ENCODE measurements at regions of chr1 and their contacts with region 1.

Region 1: GRCh38 chr1:10494754-10495474 is 20.2 kb downstream of the PEX14 start:
- DNase-seq: peak; percentile 84
- ATAC-seq: peak; percentile 88
- H3K4me3 Mint-ChIP-seq: no peak overlapping the region
- H3K27ac Mint-ChIP-seq: peak overlapping the region; percentile 67
- H3K4me1 Mint-ChIP-seq: peaks cover 15% of the 10 kb centered on the region
- H3K27me3 Mint-ChIP-seq: no peaks in the 10 kb centered on the region
- CTCF ChIP-seq: peak; percentile 97

Region 2: GRCh38 chr1:10280439-10281350 is 214.2 kb before region 1 on chr1:
- CTCF ChIA-PET with region 1: no interaction called
- POLR2A ChIA-PET with region 1: no interaction called
- DNase-seq: no peak
- ATAC-seq: no peak
- H3K4me3 Mint-ChIP-seq: no peak overlapping the region
- H3K27ac Mint-ChIP-seq: no peak overlapping the region
- H3K4me1 Mint-ChIP-seq: no peaks in the 10 kb centered on the region
- H3K27me3 Mint-ChIP-seq: no peaks in the 10 kb centered on the region
- CTCF ChIP-seq: no peak

Region 3: GRCh38 chr1:10456661-10457060 is 38.3 kb before region 1 on chr1:
- CTCF ChIA-PET with region 1: interaction called, 15 read pairs
- POLR2A ChIA-PET with region 1: no interaction called
- DNase-seq: no peak
- ATAC-seq: no peak
- H3K4me3 Mint-ChIP-seq: no peak overlapping the region
- H3K27ac Mint-ChIP-seq: peak overlapping the region; percentile 70
- H3K4me1 Mint-ChIP-seq: peaks cover 3% of the 10 kb centered on the region
- H3K27me3 Mint-ChIP-seq: no peaks in the 10 kb centered on the region; the same call in 1 of the 2 replicates
- CTCF ChIP-seq: no peak

Measured in WTC11 (cell line).